Breast epithelium (tissue), 4 donors: ENCODE measurements at regions of chr19 and their contacts with region 1.

Region 1: DNA sequence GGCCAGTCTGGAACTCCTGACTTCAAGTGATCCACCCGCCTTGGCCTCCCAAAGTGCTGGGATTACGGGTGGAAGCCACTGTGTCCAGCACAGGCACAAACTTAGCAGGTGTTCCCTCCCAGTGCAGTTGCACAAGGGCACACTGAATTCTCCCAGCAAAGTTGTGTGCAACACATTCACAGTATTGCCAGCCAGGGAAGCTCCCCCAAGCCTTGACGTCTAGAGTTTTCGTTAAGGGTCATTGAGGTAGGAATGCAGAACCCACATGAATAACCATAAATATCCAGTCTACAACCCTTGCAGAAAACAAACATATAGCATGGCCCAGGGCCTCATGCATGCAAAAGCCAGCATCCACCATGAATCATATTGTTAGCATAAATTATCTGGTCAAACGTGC is 3.3 kb upstream of the AURKC start:
- DNase-seq: no peak
- H3K4me3 ChIP-seq: no peak overlapping the region
- H3K27ac ChIP-seq: no peak overlapping the region
- H3K4me1 ChIP-seq: no peaks in the 10 kb centered on the region
- H3K27me3 ChIP-seq: no peaks in the 10 kb centered on the region
- CTCF ChIP-seq: no peak
- POLR2A ChIP-seq: no peak

Region 2: GRCh38 chr19:56119582-56119978 is 1107.9 kb before region 1 on chr19:
- intact Hi-C with region 1: loop called (anchors 5 kb)
- DNase-seq: no peak
- H3K4me3 ChIP-seq: peak overlapping the region; percentile 79 to 83 (median 82)
- H3K27ac ChIP-seq: peak overlapping the region; percentile 95 to 98
- H3K4me1 ChIP-seq: peaks cover 0 to 26% of the 10 kb centered on the region in 2 donors
- H3K27me3 ChIP-seq: no peaks in the 10 kb centered on the region
- CTCF ChIP-seq: no peak
- POLR2A ChIP-seq: no peak

Region 3: GRCh38 chr19:57171551-57172081 is 55.9 kb before region 1 on chr19:
- intact Hi-C with region 1: no loop called
- DNase-seq: peak in 1 of 2 donors; percentile 34
- H3K4me3 ChIP-seq: peak overlapping the region; percentile 32 to 68 (median 48)
- H3K27ac ChIP-seq: peak overlapping the region; percentile 54 to 75
- H3K4me1 ChIP-seq: no peaks in the 10 kb centered on the region
- H3K27me3 ChIP-seq: no peaks in the 10 kb centered on the region
- CTCF ChIP-seq: no peak
- POLR2A ChIP-seq: no peak

Region 4: GRCh38 chr19:58499021-58499927 is 1271.8 kb after region 1 on chr19:
- intact Hi-C with region 1: loop called (anchors 5 kb)
- DNase-seq: peak; percentile 99 to 100
- H3K4me3 ChIP-seq: peak overlapping the region; percentile 52 to 73 (median 65)
- H3K27ac ChIP-seq: peak overlapping the region; percentile 88 to 90
- H3K4me1 ChIP-seq: peaks cover 0 to 6% of the 10 kb centered on the region in 2 donors
- H3K27me3 ChIP-seq: no peaks in the 10 kb centered on the region
- CTCF ChIP-seq: peak; percentile 18 to 38 (median 36)
- POLR2A ChIP-seq: peak; percentile 26